ENCODE measurements at regions of chr16 and their contacts with region 1.

Region 1: DNA sequence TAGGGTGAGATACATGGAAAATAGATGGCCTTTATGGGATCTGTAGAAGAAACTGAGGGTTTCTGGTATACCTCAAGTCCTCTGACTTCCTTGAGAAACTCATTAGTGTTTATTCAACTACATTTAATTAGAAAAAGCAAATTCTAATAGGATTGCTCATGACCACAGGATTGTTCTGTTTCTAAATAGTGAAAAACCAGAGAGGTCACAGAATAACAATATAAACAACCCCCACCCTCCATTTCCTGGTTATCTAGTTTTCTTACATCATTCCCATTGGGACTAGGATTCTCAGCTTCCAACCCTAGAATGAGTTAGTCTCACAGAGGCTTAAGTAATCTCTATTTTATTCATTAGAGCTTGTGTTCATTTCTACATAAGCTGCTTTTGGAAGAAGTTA is 30.0 kb downstream of the SF3B3 start:
- DNase-seq: peak; percentile 59
- H3K4me3 ChIP-seq: no peak overlapping the region
- H3K27ac ChIP-seq: peak overlapping the region; percentile 18
- H3K4me1 ChIP-seq: peaks cover 24% of the 10 kb centered on the region
- H3K27me3 ChIP-seq: no peaks in the 10 kb centered on the region
- CTCF ChIP-seq: no peak

Region 2: GRCh38 chr16:70251629-70252354 is 301.9 kb before region 1 on chr16 and contains the start of gene EXOSC6:
- CTCF ChIA-PET with region 1: no interaction called
- dilution Hi-C with region 1: no loop called
- in situ Hi-C with region 1: no loop called
- intact Hi-C with region 1: loop called (anchors 10 kb)
- DNase-seq: peak; percentile 92
- H3K4me3 ChIP-seq: peak within 1 kb of the TSS; percentile 60 to 83 (median 65)
- H3K27ac ChIP-seq: peak within 1 kb of the TSS; percentile 51
- H3K4me1 ChIP-seq: no peaks in the 10 kb centered on the region
- H3K27me3 ChIP-seq: no peaks in the 10 kb centered on the region
- CTCF ChIP-seq: peak; percentile 86 to 91
- total RNA-seq, gene EXOSC6: 33.7 to 38.2 TPM

Region 3: DNA sequence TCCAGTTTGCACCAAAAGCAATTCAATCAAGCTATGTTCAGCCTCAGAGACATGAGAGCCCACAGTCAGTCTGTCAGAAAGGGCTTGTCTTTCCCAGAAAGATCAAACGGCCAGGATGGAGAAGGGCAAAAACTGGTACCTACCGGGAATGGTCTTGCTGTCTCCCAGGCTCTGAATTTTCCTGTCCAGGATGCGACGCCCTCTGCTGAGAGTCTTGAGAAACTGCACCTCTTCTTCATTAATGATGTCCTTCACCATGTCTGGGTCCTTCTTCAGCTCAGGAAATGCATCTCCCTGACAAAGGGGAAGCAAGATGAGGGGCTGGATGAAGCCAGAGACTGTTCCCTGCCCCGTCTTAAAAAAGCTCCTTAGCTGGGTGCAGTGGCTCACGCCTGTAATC is 286.1 kb before region 1 on chr16:
- CTCF ChIA-PET with region 1: no interaction called
- dilution Hi-C with region 1: no loop called
- in situ Hi-C with region 1: loop called in 1 of 2 experiments (anchors 10 kb)
- intact Hi-C with region 1: no loop called
- DNase-seq: peak; percentile 21
- H3K4me3 ChIP-seq: no peak overlapping the region
- H3K27ac ChIP-seq: no peak overlapping the region
- H3K4me1 ChIP-seq: peaks cover 5% of the 10 kb centered on the region
- H3K27me3 ChIP-seq: no peaks in the 10 kb centered on the region
- CTCF ChIP-seq: peak; percentile 56 to 59

Region 4: GRCh38 chr16:70589998-70590471 is 36.4 kb after region 1 on chr16:
- CTCF ChIA-PET with region 1: no interaction called
- dilution Hi-C with region 1: no loop called
- in situ Hi-C with region 1: no loop called
- intact Hi-C with region 1: no loop called
- DNase-seq: peak; percentile 58
- H3K4me3 ChIP-seq: peak overlapping the region in 1 of 3 experiments; percentile 24
- H3K27ac ChIP-seq: no peak overlapping the region
- H3K4me1 ChIP-seq: peaks cover 19% of the 10 kb centered on the region
- H3K27me3 ChIP-seq: no peaks in the 10 kb centered on the region
- CTCF ChIP-seq: no peak

Region 5: DNA sequence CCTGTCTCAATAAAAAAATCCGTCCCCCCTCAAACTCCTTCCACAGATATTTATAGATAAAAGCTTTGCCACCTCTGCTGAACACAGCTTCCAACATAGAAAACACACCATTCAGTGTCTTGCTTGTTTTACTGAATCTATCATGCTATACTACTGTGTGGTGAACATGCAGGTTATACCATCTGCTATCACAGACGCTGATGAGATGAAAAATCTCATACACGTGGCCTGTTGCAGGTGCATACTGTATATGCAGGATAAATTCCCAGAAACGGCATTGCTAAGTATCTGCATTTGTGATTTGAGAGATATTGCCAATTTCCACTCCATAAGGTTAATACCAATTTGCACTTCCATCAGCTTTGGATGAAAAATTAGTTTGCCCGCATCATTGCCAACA is 62.3 kb after region 1 on chr16:
- CTCF ChIA-PET with region 1: no interaction called
- dilution Hi-C with region 1: loop called (anchors 5 kb)
- in situ Hi-C with region 1: no loop called
- intact Hi-C with region 1: no loop called
- DNase-seq: no peak
- H3K4me3 ChIP-seq: no peak overlapping the region
- H3K27ac ChIP-seq: no peak overlapping the region
- H3K4me1 ChIP-seq: no peaks in the 10 kb centered on the region
- H3K27me3 ChIP-seq: no peaks in the 10 kb centered on the region
- CTCF ChIP-seq: no peak

Region 6: GRCh38 chr16:70635336-70636016 is 81.8 kb after region 1 on chr16:
- CTCF ChIA-PET with region 1: no interaction called
- dilution Hi-C with region 1: no loop called
- in situ Hi-C with region 1: no loop called
- intact Hi-C with region 1: no loop called
- DNase-seq: peak; percentile 65
- H3K4me3 ChIP-seq: no peak overlapping the region
- H3K27ac ChIP-seq: no peak overlapping the region
- H3K4me1 ChIP-seq: peaks cover 5% of the 10 kb centered on the region
- H3K27me3 ChIP-seq: no peaks in the 10 kb centered on the region
- CTCF ChIP-seq: no peak

Measured in mammary epithelial cell (primary cell).